Ovary (tissue), 10 donors: ENCODE measurements at regions of chr15 and their contacts with region 1.

Region 1: GRCh38 chr15:85296615-85297402 is 83.6 kb upstream of the AKAP13 start:
- DNase-seq: peak; percentile 50 to 68 (median 53)
- H3K4me3 ChIP-seq: peak overlapping the region; percentile 27
- H3K27ac ChIP-seq: no peak overlapping the region
- H3K4me1 ChIP-seq: no peaks in the 10 kb centered on the region
- H3K27me3 ChIP-seq: no peaks in the 10 kb centered on the region
- CTCF ChIP-seq: peak in 2 of 3 donors; percentile 53
- EP300 ChIP-seq: no peak
- POLR2A ChIP-seq: no peak

Region 2: DNA sequence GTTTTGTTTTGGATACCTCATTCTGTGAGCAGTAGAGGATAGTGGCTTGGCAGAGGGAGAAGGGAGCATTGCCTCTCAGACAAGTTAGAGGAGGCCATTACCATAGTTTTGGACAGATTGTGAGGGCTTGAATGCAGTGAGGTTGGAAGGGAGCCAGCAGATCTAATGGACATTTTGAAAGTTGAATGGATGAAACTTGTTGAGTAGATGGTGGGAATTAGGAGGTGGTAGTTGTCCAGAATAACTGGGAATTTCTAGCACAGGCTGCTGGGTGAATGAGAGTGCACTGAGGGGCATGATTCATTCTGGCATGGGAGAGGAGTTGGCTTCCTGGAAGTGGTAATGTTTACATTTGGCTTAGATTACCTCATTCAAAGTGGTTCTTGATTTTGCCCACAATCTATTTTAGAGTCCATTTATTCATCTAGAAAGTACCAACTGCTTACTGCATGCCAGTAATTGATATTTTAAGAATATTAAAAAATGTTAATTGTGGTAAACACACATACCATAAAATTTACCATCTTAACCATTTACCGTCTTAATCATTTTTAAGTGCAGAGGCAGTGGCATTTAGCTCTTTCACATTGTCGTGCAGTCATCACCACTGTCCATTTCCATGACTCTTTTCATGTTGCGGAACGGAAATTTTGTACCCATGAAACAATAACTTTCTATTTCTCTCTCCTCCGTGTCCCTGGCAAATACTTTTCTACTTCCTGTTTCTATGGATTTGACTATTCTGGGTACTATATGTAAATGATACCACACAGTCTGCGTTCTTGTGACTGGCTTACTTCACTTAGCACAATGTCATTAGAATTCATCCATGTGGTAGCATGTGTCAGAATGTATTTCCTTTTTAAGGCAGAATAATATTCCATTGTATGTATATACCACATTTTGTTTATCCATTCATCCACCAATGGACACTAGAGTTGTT is 111.3 kb after region 1 on chr15:
- intact Hi-C with region 1: loop called in 1 of 4 experiments (anchors 10 kb)
- DNase-seq: peak in 1 of 5 donors; percentile 9
- H3K4me3 ChIP-seq: no peak overlapping the region
- H3K27ac ChIP-seq: no peak overlapping the region
- H3K4me1 ChIP-seq: peaks cover 15% of the 10 kb centered on the region
- H3K27me3 ChIP-seq: no peaks in the 10 kb centered on the region
- CTCF ChIP-seq: no peak
- EP300 ChIP-seq: no peak
- POLR2A ChIP-seq: no peak

Region 3: DNA sequence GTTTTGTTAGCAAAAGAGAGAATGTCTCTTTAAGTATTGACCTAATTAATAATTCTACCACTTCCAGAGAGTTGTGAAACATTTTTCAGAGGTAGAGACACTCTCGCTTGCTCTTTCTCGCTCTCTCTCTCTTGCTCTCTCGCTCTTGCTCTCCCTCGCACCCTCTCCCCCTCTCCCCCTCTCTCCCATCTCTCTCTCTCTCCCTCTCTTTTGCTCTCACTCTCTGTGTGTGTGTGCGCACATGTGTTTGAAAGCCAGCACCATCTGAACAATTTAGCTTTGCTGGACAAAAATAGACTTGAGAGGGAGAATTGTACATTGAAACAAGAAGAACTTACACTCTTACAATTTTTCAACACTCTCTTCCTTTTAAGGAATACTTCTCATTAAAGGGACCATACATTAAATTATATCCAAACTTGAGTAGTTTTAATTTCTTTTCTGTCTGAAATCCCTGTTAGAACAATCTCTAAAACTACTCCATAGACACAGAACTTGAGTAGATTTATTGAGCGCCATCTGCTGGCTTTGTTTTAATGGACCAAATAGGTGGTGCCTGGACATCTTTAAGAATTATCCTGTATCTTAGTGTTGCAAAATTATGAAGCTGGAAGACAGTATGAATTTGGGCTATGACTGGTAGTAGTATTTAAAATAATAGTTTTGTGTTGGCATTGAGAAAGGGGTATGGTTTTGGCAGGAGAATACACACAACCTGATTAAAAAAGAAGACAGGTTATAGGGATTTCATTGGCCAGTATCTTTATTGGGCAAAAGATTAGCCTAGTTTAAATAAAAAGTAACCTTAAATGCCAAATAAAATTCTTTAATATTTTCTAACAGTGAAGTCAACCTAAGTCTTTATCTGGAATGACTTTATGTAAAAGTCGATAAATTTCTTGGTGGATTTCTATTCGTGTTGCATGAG is 208.2 kb after region 1 on chr15:
- intact Hi-C with region 1: loop called in 1 of 4 experiments (anchors 10 kb)
- DNase-seq: peak in 3 of 5 donors; percentile 11 to 65 (median 32)
- H3K4me3 ChIP-seq: no peak overlapping the region
- H3K27ac ChIP-seq: no peak overlapping the region
- H3K4me1 ChIP-seq: peaks cover 4% of the 10 kb centered on the region
- H3K27me3 ChIP-seq: no peaks in the 10 kb centered on the region
- CTCF ChIP-seq: peak in 2 of 3 donors; percentile 24 to 40
- EP300 ChIP-seq: no peak
- POLR2A ChIP-seq: no peak

Region 4: GRCh38 chr15:85840065-85840801 is 543.4 kb after region 1 on chr15:
- intact Hi-C with region 1: loop called in 1 of 4 experiments (anchors 10 kb)
- DNase-seq: peak; percentile 71 to 87 (median 76)
- H3K4me3 ChIP-seq: peak overlapping the region; percentile 11
- H3K27ac ChIP-seq: no peak overlapping the region
- H3K4me1 ChIP-seq: no peaks in the 10 kb centered on the region
- H3K27me3 ChIP-seq: no peaks in the 10 kb centered on the region
- CTCF ChIP-seq: peak; percentile 77 to 88 (median 86)
- EP300 ChIP-seq: no peak
- POLR2A ChIP-seq: no peak